Panc1 (cell line): ENCODE measurements at regions of chr19 and their contacts with region 1.

Region 1: DNA sequence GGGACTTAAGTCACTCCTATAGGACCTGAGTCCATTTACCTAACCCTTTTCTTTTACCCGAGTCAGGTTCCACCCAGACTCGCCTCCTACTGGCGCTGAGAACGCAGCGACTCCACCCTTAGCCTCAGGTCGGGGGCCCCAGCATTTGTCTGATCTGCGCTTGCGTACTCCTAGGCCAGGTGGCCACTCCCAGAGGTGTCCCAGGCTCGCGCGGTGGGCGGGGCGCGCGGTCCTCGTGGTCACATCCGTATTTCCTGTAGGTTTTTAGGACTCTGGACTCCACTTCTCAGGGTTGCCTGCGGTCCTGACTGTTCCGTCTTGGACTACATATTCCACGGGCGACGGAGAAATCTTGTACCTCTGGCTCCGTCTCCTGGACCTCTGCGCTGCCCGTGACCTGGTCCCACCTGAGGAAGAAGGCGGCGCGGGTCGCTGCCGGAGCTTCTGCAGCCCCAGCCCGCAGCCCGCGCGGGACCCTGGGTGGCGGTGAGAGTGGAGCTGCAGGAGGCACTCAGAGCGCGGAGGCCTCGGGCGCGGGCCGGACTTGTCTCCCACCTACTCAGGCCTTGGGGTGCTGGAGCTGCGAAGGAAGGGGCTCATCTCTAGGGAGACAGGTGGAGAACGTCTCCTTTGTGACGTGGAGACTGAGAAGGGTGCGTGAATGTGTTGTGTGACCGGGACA is 11.0 kb upstream of the ZNF573 start:
- DNase-seq: no peak
- ATAC-seq: no peak
- H3K4me3 ChIP-seq: no peak overlapping the region
- H3K27ac ChIP-seq: no peak overlapping the region
- H3K4me1 ChIP-seq: no peaks in the 10 kb centered on the region
- H3K27me3 ChIP-seq: no peaks in the 10 kb centered on the region
- CTCF ChIP-seq: no peak

Region 2: GRCh38 chr19:38155453-38155852 is 365.1 kb after region 1 on chr19:
- CTCF ChIA-PET with region 1: no interaction called
- POLR2A ChIA-PET with region 1: interaction called, 10 read pairs
- in situ Hi-C with region 1: no loop called
- intact Hi-C with region 1: no loop called
- DNase-seq: no peak
- ATAC-seq: no peak
- H3K4me3 ChIP-seq: no peak overlapping the region
- H3K27ac ChIP-seq: no peak overlapping the region
- H3K4me1 ChIP-seq: no peaks in the 10 kb centered on the region
- H3K27me3 ChIP-seq: no peaks in the 10 kb centered on the region
- CTCF ChIP-seq: no peak

Region 3: GRCh38 chr19:38869856-38870607 is 1079.6 kb after region 1 on chr19:
- CTCF ChIA-PET with region 1: no interaction called
- POLR2A ChIA-PET with region 1: no interaction called
- in situ Hi-C with region 1: no loop called
- intact Hi-C with region 1: no loop called
- DNase-seq: no peak
- ATAC-seq: peak; percentile 44
- H3K4me3 ChIP-seq: no peak overlapping the region
- H3K27ac ChIP-seq: no peak overlapping the region
- H3K4me1 ChIP-seq: no peaks in the 10 kb centered on the region
- H3K27me3 ChIP-seq: no peaks in the 10 kb centered on the region
- CTCF ChIP-seq: no peak